CD4-positive, alpha-beta memory T cell (primary cell): ENCODE measurements at regions of chr1 and their contacts with region 1.

Region 1: GRCh38 chr1:2194898-2195673 is 514 bp upstream of the FAAP20 start:
- DNase-seq: peak; percentile 91 to 98 (median 94)
- H3K4me3 ChIP-seq: peak overlapping the region; percentile 57 to 68
- H3K4me3 Mint-ChIP-seq: peak overlapping the region; percentile 82 to 94 (median 84)
- H3K27ac ChIP-seq: peak overlapping the region; percentile 64
- H3K27ac Mint-ChIP-seq: peak overlapping the region; percentile 87 to 97 (median 92)
- H3K4me1 ChIP-seq: peaks cover 49% of the 10 kb centered on the region
- H3K4me1 Mint-ChIP-seq: peaks cover 8 to 43% (median 24%) of the 10 kb centered on the region in 4 donors
- H3K27me3 ChIP-seq: no peaks in the 10 kb centered on the region
- H3K27me3 Mint-ChIP-seq: no peaks in the 10 kb centered on the region

Region 2: GRCh38 chr1:2025534-2025981 is 169.5 kb before region 1 on chr1:
- CTCF ChIA-PET with region 1: no interaction called
- POLR2A ChIA-PET with region 1: no interaction called
- intact Hi-C with region 1: no loop called
- DNase-seq: peak in 1 of 5 donors; percentile 22
- H3K4me3 ChIP-seq: no peak overlapping the region
- H3K4me3 Mint-ChIP-seq: no peak overlapping the region
- H3K27ac ChIP-seq: no peak overlapping the region
- H3K27ac Mint-ChIP-seq: no peak overlapping the region
- H3K4me1 ChIP-seq: peaks cover 4% of the 10 kb centered on the region
- H3K4me1 Mint-ChIP-seq: peaks cover 0 to 4% (median 0%) of the 10 kb centered on the region in 4 donors
- H3K27me3 ChIP-seq: peaks cover 15% of the 10 kb centered on the region
- H3K27me3 Mint-ChIP-seq: peaks cover 22 to 23% of the 10 kb centered on the region in 2 donors

Region 3: DNA sequence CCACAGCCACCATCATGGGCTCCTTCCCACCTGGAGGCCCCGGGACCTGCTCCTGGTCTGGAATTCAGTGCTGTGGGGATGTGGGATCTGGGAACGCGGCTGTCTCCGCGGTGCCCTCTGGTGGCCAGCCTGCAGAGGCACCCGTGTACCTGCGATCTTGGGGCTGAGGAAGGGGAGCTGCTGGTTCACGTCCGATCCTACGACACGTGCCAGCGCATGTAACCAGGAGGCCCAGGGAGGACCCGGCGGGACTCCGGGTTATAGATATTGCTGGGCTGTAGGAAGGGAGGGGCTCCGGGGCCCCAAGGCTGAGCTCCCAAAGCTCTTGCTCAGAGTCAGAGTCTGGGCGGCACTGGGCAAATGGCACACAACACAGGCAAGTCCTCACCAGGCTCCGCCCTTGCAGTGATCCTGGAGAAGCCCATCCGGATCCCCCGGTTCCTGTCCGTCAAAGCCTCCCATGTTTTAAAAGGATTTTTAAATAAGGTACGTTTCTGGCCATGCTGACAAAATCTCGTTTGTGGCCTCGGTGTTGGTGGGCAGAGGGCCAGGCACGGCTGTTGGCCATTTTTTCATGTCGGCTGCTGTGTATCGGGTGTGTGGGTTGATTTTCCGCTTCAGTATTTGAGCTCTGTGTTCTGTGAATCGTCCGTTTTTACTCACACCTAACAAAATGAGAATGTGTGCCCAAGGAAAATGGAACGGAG is 20.6 kb before region 1 on chr1:
- CTCF ChIA-PET with region 1: interaction called, 18 read pairs
- POLR2A ChIA-PET with region 1: interaction called, 5 read pairs
- intact Hi-C with region 1: no loop called
- DNase-seq: peak in 4 of 5 donors; percentile 30 to 44 (median 40)
- H3K4me3 ChIP-seq: peak overlapping the region in 1 of 2 donors; percentile 35
- H3K4me3 Mint-ChIP-seq: peak overlapping the region; percentile 38 to 85 (median 68)
- H3K27ac ChIP-seq: no peak overlapping the region
- H3K27ac Mint-ChIP-seq: peak overlapping the region in 3 of 7 donors; percentile 46 to 57 (median 47)
- H3K4me1 ChIP-seq: peaks cover 8% of the 10 kb centered on the region
- H3K4me1 Mint-ChIP-seq: peaks cover 0 to 27% (median 3%) of the 10 kb centered on the region in 4 donors
- H3K27me3 ChIP-seq: no peaks in the 10 kb centered on the region
- H3K27me3 Mint-ChIP-seq: no peaks in the 10 kb centered on the region

Region 4: DNA sequence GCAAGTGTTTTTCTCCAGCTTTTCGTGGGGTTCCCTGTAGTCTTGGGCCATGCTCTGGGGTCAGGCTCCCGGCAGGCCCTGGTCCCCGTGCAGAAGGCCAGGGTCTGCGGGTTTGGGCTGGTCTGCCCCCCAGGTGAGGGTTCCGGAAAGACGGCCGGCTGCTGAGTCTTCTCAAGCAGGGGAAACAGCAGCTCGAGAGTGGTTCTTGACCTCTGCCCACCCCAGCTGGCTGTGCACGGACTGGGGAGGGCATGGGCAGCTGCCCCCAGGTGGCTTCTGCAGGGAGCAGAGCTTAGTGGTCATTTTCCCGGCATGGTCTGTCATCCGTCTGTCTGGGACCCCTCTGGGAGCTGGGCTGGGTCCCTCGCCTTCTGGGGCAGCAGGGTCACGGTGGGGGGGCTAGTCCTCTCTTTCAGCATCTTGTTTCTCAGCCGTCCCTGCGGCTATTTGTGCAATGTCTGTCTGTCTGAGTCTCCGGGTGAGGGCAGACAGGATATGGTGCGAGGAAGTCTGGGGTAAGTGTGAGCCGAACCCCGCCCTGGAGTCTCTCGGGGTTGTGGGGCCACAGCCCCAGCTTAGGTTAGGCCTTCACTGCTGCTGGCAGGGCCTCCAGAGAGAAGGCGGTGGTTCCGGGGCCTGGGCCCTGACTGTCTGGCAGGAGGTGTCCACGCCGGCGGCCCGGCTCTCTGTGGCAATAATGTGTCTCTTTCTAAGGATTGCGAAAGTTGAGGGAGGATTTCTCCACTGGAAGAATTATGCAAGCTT is 39.1 kb after region 1 on chr1:
- CTCF ChIA-PET with region 1: interaction called, 40 read pairs
- POLR2A ChIA-PET with region 1: interaction called, 83 read pairs
- intact Hi-C with region 1: no loop called
- DNase-seq: peak; percentile 78 to 93 (median 80)
- H3K4me3 ChIP-seq: peak overlapping the region; percentile 90 to 97
- H3K4me3 Mint-ChIP-seq: peak overlapping the region; percentile 92 to 99 (median 96)
- H3K27ac ChIP-seq: peak overlapping the region; percentile 84
- H3K27ac Mint-ChIP-seq: peak overlapping the region; percentile 94 to 100 (median 99)
- H3K4me1 ChIP-seq: peaks cover 81% of the 10 kb centered on the region
- H3K4me1 Mint-ChIP-seq: peaks cover 45 to 81% (median 61%) of the 10 kb centered on the region in 4 donors
- H3K27me3 ChIP-seq: no peaks in the 10 kb centered on the region
- H3K27me3 Mint-ChIP-seq: peaks cover 0 to 4% of the 10 kb centered on the region in 2 donors

Region 5: GRCh38 chr1:2314803-2315673 is 120.0 kb after region 1 on chr1:
- CTCF ChIA-PET with region 1: interaction called, 39 read pairs
- POLR2A ChIA-PET with region 1: interaction called, 24 read pairs
- intact Hi-C with region 1: loop called (anchors 1 kb)
- DNase-seq: peak; percentile 65 to 71 (median 67)
- H3K4me3 ChIP-seq: no peak overlapping the region
- H3K4me3 Mint-ChIP-seq: peak overlapping the region in 6 of 8 donors; percentile 21 to 70 (median 55)
- H3K27ac ChIP-seq: peak overlapping the region; percentile 63
- H3K27ac Mint-ChIP-seq: peak overlapping the region in 5 of 7 donors; percentile 36 to 79 (median 74)
- H3K4me1 ChIP-seq: peaks cover 42% of the 10 kb centered on the region
- H3K4me1 Mint-ChIP-seq: peaks cover 2 to 9% (median 4%) of the 10 kb centered on the region in 4 donors
- H3K27me3 ChIP-seq: no peaks in the 10 kb centered on the region
- H3K27me3 Mint-ChIP-seq: no peaks in the 10 kb centered on the region

Region 6: GRCh38 chr1:2412519-2413233 is 217.6 kb after region 1 on chr1 and contains the start of gene PEX10:
- CTCF ChIA-PET with region 1: interaction called, 4 read pairs
- POLR2A ChIA-PET with region 1: interaction called, 7 read pairs
- intact Hi-C with region 1: loop called (anchors 1 kb)
- DNase-seq: peak; percentile 96 to 98 (median 97)
- H3K4me3 ChIP-seq: peak within 1 kb of the TSS; percentile 47 to 70
- H3K4me3 Mint-ChIP-seq: peak within 1 kb of the TSS; percentile 82 to 94 (median 87)
- H3K27ac ChIP-seq: peak within 1 kb of the TSS; percentile 84
- H3K27ac Mint-ChIP-seq: peak within 1 kb of the TSS; percentile 75 to 99 (median 92)
- H3K4me1 ChIP-seq: peaks cover 55% of the 10 kb centered on the region
- H3K4me1 Mint-ChIP-seq: peaks cover 17 to 51% (median 32%) of the 10 kb centered on the region in 4 donors
- H3K27me3 ChIP-seq: no peaks in the 10 kb centered on the region
- H3K27me3 Mint-ChIP-seq: no peaks in the 10 kb centered on the region
- total RNA-seq, gene PEX10: 11.7 to 13.0 TPM